Sigmoid colon (tissue), 7 donors: ENCODE measurements at regions of chr2 and their contacts with region 1.

Region 1: DNA sequence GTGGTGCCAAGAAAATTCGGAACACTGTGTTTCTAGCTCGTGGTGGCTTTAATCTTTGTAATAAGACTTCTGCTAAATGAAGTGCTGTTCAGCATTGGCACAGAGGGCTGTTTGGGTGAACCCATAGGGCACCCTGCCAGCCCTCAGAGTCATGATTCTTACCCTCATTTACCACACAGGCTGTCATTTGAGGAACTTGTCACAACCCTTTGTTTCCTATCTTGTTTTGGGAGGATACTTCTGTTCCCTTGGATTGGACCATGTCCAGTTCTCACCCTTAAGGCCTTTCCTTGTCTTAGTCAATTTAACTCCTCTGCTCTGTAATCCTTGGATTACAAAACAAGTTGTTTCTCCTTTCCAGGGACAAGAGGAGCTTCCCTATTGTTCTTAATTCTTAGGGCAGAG is 225.7 kb downstream of the MTX2 start:
- DNase-seq: peak; percentile 85
- H3K4me3 ChIP-seq: no peak overlapping the region
- H3K27ac ChIP-seq: peak overlapping the region in 3 of 4 donors; percentile 23 to 68 (median 46)
- H3K4me1 ChIP-seq: peaks cover 0 to 41% (median 3%) of the 10 kb centered on the region in 4 donors
- H3K27me3 ChIP-seq: no peaks in the 10 kb centered on the region
- CTCF ChIP-seq: no peak
- EP300 ChIP-seq: no peak
- POLR2A ChIP-seq: no peak

Region 2: GRCh38 chr2:176454893-176455811 is 39.8 kb before region 1 on chr2:
- intact Hi-C with region 1: loop called (anchors 5 kb)
- DNase-seq: peak; percentile 92
- H3K4me3 ChIP-seq: no peak overlapping the region
- H3K27ac ChIP-seq: peak overlapping the region; percentile 36 to 59 (median 53)
- H3K4me1 ChIP-seq: peaks cover 0 to 12% (median 0%) of the 10 kb centered on the region in 4 donors
- H3K27me3 ChIP-seq: no peaks in the 10 kb centered on the region
- CTCF ChIP-seq: peak; percentile 48 to 93 (median 82)
- EP300 ChIP-seq: no peak
- POLR2A ChIP-seq: no peak